ENCODE measurements at regions of chr17 and their contacts with region 1.

Region 1: DNA sequence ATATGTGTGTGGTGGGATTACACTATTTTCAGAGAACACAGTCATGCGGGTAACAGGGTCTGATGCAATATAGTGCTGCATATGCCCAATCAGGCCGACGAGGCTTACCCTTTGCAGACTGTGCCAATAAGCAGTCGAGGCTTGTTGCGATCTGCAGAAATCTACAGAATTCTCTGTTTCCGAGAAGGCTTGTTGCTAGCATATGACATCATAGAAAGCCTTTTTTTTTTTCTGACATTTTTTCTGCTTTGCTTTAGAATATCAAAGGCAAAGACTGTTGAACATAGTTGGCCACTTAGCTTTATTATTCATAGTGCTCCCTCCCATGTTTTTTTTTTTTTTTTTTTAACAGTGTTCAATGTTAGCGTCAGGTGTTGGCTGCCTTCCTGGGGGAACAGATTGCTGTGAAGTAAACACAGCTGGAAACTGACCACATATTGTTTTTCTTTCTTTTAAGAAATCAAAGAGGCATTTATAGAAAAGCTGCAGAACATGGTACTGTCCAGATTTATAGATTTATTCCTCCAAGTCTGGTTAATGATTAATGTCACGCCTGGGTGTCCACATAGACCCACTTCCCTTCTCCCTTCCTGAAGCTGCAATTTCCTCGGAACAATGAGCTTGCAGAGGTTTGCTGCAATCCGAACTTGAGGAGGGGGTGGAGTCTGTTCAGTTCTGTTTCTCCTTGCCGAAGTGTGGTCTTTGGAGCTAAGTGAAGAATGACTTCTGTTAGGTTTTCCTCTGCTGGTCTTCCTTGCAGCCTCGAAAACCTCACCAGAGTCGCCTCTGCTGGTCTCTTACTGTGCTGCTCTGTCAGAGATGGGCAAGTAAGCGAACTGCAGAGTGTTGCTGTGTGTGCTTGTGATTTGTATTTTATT is 87.3 kb downstream of the MAP2K6 start:
- DNase-seq: no peak
- H3K4me3 ChIP-seq: peak overlapping the region in 2 of 4 donors; percentile 13 to 26
- H3K27ac ChIP-seq: peak overlapping the region; percentile 23 to 69 (median 60)
- H3K4me1 ChIP-seq: peaks cover 0 to 25% (median 18%) of the 10 kb centered on the region in 4 donors
- H3K27me3 ChIP-seq: no peaks in the 10 kb centered on the region
- CTCF ChIP-seq: no peak
- EP300 ChIP-seq: no peak
- POLR2A ChIP-seq: no peak

Region 2: DNA sequence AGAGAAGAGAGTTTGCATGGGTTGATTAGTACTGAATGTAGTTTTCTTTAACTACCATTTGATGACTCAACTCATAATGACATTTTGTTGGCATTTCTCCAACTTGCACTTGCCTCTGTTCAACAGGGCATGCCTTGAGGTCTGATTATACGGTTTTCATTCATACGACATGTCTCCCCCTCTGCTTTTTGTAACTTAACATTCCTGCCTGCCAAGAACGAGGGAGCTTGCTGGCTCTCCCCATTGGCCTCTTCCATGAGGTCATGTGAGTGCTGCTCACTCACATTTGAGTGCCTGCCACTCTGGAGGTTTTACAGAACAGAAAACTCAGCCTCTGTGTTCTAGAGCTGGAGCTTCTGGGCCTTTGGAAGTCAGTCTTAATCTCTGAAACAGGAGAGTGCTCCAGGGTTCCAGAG is 67.7 kb before region 1 on chr17:
- intact Hi-C with region 1: loop called (anchors 5 kb)
- DNase-seq: no peak
- H3K4me3 ChIP-seq: no peak overlapping the region
- H3K27ac ChIP-seq: peak overlapping the region in 2 of 4 donors; percentile 4 to 43
- H3K4me1 ChIP-seq: peaks cover 0 to 33% (median 26%) of the 10 kb centered on the region in 4 donors
- H3K27me3 ChIP-seq: no peaks in the 10 kb centered on the region
- CTCF ChIP-seq: no peak
- EP300 ChIP-seq: no peak
- POLR2A ChIP-seq: no peak

Measured in sigmoid colon (tissue), 7 donors.